GM10248 (cell line): ENCODE measurements at regions of chr6 and their contacts with region 1.

Region 1: GRCh38 chr6:54717849-54718455 is 128.6 kb upstream of the FAM83B start:
- DNase-seq: peak; percentile 18
- CTCF ChIP-seq: peak; percentile 83

Region 2: DNA sequence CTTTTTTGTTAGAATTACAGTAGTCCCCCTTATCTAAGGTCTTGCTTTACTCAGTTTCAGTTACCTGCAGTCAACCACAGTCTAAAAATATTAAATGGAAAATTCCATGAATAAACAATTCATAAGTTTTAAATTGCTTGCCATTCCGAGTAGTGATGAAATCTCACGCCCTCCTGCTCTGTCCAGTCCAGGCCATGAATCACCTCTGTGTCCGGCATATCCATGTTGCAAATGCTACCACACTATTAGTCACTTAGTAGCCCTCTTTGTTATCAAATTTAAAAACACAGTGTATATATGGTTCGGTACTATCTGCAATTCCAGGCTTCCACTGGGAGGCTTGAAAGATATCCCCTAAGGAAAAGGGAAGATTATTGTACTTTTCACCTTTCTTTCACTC is 36.0 kb before region 1 on chr6:
- CTCF ChIA-PET with region 1: interaction called, 19 read pairs
- POLR2A ChIA-PET with region 1: no interaction called
- DNase-seq: no peak
- CTCF ChIP-seq: no peak

Region 3: DNA sequence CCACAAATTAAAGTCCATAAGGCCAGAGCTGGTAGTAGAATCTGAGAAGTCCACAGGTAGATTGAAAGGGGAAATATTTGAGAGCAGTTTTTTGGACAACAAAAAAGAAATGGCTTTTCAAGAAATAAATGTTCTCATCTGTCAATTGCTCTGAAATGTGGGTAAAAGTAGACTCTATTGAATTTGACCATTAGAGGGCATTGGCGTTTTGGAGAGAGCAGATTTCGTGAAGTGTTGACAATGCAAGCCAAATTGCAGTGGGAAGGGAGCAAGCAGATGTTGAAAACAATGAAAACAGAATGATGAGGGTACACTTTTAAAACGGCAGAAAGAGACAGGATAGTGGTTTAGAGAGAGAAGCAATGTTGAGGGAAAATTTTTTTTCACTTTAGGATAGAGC is 20.5 kb before region 1 on chr6:
- CTCF ChIA-PET with region 1: interaction called, 64 read pairs
- POLR2A ChIA-PET with region 1: no interaction called
- DNase-seq: no peak
- CTCF ChIP-seq: peak; percentile 24

Region 4: GRCh38 chr6:54737247-54737646 is 19.3 kb after region 1 on chr6:
- CTCF ChIA-PET with region 1: interaction called, 20 read pairs
- POLR2A ChIA-PET with region 1: no interaction called
- DNase-seq: peak; percentile 15
- CTCF ChIP-seq: peak; percentile 17

Region 5: DNA sequence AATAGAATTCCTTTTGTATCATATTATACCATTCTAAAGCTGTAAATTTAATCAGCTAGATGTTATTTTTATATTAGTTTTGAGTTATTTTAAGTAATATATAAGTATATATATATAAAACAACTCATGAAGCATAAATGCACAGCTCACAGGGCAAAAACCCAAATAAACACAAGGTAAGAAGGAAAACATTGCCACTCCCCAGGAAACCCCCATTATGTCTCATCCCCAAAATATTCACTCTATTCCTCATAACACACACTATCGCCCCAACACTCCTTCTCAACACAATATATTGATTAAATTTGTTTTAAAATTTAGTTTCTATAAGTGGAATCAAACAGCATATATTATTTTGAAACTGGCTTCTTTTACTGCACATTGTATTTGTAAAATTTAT is 30.0 kb after region 1 on chr6:
- CTCF ChIA-PET with region 1: interaction called, 11 read pairs
- POLR2A ChIA-PET with region 1: no interaction called
- DNase-seq: no peak
- CTCF ChIP-seq: no peak

Region 6: GRCh38 chr6:54992789-54993188 is 274.8 kb after region 1 on chr6:
- CTCF ChIA-PET with region 1: interaction called, 20 read pairs
- POLR2A ChIA-PET with region 1: no interaction called
- DNase-seq: no peak
- CTCF ChIP-seq: no peak

Region 7: GRCh38 chr6:55069132-55069781 is 351.3 kb after region 1 on chr6:
- CTCF ChIA-PET with region 1: interaction called, 24 read pairs
- POLR2A ChIA-PET with region 1: no interaction called
- DNase-seq: no peak
- CTCF ChIP-seq: peak; percentile 71